Natural killer cell (primary cell): ENCODE measurements at regions of chr5 and their contacts with region 1.

Region 1: GRCh38 chr5:98928873-98929696 is at the start of gene CHD1:
- DNase-seq: peak; percentile 95 to 98
- ATAC-seq: peak; percentile 67 to 88 (median 74)
- H3K4me3 ChIP-seq: peak within 1 kb of the TSS; percentile 79
- H3K4me3 Mint-ChIP-seq: peak within 1 kb of the TSS; percentile 99
- H3K27ac ChIP-seq: peak within 1 kb of the TSS; percentile 98
- H3K27ac Mint-ChIP-seq: peak within 1 kb of the TSS; percentile 97 to 98
- H3K4me1 ChIP-seq: peaks cover 17% of the 10 kb centered on the region
- H3K4me1 Mint-ChIP-seq: peaks cover 44 to 60% of the 10 kb centered on the region in 2 donors
- H3K27me3 ChIP-seq: no peaks in the 10 kb centered on the region
- H3K27me3 Mint-ChIP-seq: no peaks in the 10 kb centered on the region
- CTCF ChIP-seq: no peak
- total RNA-seq, gene CHD1: 116 to 127 (median 117) TPM

Region 2: DNA sequence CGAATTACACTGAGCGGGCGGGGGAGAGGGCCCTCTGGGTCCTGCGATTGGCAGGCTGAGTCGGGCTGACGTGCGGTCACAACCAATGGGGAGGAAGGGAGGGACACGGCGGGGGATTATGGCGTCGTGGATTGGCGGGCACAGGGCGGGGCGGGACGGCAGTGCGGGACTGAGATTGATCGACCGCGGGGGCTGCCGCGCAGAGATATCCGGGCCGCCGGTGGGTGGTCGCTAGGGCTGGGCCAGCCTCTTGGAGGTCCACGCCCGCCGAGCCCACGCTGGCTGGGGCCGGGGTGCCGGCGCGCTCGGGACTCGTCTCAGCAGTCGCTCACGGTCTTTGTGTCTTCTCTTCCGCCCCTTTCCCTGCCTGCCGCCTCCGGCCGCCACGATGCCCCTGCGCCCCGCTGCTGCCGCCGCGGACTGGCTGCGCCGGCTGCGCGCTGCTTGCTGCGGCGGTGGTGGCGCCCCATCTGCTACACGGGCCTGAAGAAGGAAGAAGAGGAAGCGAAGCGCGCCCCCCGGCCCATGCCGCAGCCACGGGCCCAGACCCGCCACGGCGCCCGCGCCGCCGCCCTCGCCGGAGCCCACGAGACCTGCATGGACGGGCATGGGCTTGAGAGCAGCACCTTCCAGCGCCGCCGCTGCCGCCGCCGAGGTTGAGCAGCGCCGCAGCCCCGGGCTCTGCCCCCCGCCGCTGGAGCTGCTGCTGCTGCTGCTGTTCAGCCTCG is 155.5 kb before region 1 on chr5 and contains the start of gene RGMB:
- intact Hi-C with region 1: loop called (anchors 10 kb)
- DNase-seq: peak; percentile 57 to 92
- ATAC-seq: peak; percentile 78 to 86 (median 84)
- H3K4me3 ChIP-seq: peak within 1 kb of the TSS; percentile 57
- H3K4me3 Mint-ChIP-seq: peak within 1 kb of the TSS; percentile 94
- H3K27ac ChIP-seq: no peak within 1 kb of the TSS
- H3K27ac Mint-ChIP-seq: peak within 1 kb of the TSS; percentile 44 to 53
- H3K4me1 ChIP-seq: peaks cover 47% of the 10 kb centered on the region
- H3K4me1 Mint-ChIP-seq: peaks cover 48 to 61% of the 10 kb centered on the region in 2 donors
- H3K27me3 ChIP-seq: peaks cover 55% of the 10 kb centered on the region
- H3K27me3 Mint-ChIP-seq: peaks cover 47 to 78% of the 10 kb centered on the region in 2 donors
- CTCF ChIP-seq: no peak
- total RNA-seq, gene RGMB: 0.35 to 1.5 (median 0.86) TPM

Region 3: DNA sequence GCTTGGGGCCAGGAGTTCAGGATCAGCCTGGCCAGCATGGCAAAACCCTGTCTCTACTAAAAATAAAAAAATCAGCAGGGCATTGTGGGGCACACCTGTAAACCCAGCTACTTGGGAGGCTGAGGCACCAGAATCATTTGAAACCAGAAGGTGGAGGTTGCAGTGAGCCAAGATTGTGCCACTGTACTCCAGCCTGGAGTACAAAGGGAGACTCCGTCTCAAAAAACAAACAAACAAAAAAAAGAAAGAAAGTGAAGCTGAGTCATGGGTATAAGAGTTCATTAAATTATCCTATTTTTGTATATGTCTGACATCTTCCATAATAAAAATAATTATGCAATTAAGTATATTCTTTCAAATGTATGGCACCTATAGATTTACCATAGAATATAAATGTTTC is 37.5 kb before region 1 on chr5:
- intact Hi-C with region 1: no loop called
- DNase-seq: no peak
- ATAC-seq: no peak
- H3K4me3 ChIP-seq: no peak overlapping the region
- H3K4me3 Mint-ChIP-seq: no peak overlapping the region
- H3K27ac ChIP-seq: no peak overlapping the region
- H3K27ac Mint-ChIP-seq: no peak overlapping the region
- H3K4me1 ChIP-seq: no peaks in the 10 kb centered on the region
- H3K4me1 Mint-ChIP-seq: peaks cover 5 to 9% of the 10 kb centered on the region in 2 donors
- H3K27me3 ChIP-seq: no peaks in the 10 kb centered on the region
- H3K27me3 Mint-ChIP-seq: no peaks in the 10 kb centered on the region
- CTCF ChIP-seq: no peak

Region 4: DNA sequence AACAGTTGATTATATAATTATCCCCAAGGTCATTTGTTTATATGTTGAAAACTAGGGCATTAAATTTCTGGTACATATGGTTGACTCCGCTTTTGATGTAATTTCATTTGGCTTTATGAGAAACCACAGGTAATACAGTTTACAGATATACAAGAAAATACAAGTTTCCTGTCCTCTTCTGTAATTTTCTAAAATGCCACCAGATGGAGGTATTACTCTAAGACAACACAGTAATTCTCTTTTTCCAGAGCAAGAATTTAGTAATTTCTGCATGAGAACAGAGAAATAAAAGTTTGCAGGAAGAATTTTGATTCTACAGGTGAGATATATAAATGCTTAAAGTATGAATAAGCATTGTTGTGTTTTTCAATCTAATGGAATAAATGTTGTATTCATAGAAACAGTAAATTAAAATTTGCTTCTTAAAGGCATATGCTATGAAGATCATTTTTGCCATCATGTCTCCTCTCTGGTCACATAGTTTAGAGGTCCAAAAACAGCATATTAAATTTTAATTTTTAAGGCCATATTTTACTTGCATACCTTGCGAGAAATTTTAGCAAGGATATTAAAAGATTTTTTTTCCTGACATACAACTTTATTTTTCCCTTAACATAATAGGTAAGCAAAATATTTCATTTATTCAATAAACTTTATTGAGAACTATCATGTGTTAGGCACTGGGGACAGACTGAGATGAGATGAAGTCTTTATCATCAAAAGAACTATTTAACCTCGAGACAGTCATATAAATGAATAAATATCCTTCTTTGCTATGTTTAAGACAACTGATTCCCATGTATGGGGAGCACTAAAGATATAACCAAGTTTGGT is 23.0 kb before region 1 on chr5:
- intact Hi-C with region 1: loop called (anchors 1 kb)
- DNase-seq: peak in 1 of 2 donors; percentile 75
- ATAC-seq: peak; percentile 63 to 80 (median 64)
- H3K4me3 ChIP-seq: no peak overlapping the region
- H3K4me3 Mint-ChIP-seq: no peak overlapping the region
- H3K27ac ChIP-seq: no peak overlapping the region
- H3K27ac Mint-ChIP-seq: peak overlapping the region; percentile 19 to 63
- H3K4me1 ChIP-seq: no peaks in the 10 kb centered on the region
- H3K4me1 Mint-ChIP-seq: peaks cover 40 to 43% of the 10 kb centered on the region in 2 donors
- H3K27me3 ChIP-seq: no peaks in the 10 kb centered on the region
- H3K27me3 Mint-ChIP-seq: no peaks in the 10 kb centered on the region
- CTCF ChIP-seq: peak; percentile 94

Region 5: GRCh38 chr5:99032234-99033013 is 103.3 kb after region 1 on chr5:
- intact Hi-C with region 1: loop called (anchors 2 kb)
- DNase-seq: peak in 1 of 2 donors; percentile 60
- ATAC-seq: peak in 2 of 3 donors; percentile 29 to 35
- H3K4me3 ChIP-seq: peak overlapping the region; percentile 50
- H3K4me3 Mint-ChIP-seq: peak overlapping the region; percentile 90
- H3K27ac ChIP-seq: peak overlapping the region; percentile 99
- H3K27ac Mint-ChIP-seq: peak overlapping the region; percentile 93 to 94
- H3K4me1 ChIP-seq: peaks cover 16% of the 10 kb centered on the region
- H3K4me1 Mint-ChIP-seq: peaks cover 22 to 27% of the 10 kb centered on the region in 2 donors
- H3K27me3 ChIP-seq: no peaks in the 10 kb centered on the region
- H3K27me3 Mint-ChIP-seq: no peaks in the 10 kb centered on the region
- CTCF ChIP-seq: no peak